Activated B cell treated with CpG ODN at 0.5 μM for 24 hours (primary cell): ENCODE measurements at regions of chr15 and their contacts with region 1.

Region 1: DNA sequence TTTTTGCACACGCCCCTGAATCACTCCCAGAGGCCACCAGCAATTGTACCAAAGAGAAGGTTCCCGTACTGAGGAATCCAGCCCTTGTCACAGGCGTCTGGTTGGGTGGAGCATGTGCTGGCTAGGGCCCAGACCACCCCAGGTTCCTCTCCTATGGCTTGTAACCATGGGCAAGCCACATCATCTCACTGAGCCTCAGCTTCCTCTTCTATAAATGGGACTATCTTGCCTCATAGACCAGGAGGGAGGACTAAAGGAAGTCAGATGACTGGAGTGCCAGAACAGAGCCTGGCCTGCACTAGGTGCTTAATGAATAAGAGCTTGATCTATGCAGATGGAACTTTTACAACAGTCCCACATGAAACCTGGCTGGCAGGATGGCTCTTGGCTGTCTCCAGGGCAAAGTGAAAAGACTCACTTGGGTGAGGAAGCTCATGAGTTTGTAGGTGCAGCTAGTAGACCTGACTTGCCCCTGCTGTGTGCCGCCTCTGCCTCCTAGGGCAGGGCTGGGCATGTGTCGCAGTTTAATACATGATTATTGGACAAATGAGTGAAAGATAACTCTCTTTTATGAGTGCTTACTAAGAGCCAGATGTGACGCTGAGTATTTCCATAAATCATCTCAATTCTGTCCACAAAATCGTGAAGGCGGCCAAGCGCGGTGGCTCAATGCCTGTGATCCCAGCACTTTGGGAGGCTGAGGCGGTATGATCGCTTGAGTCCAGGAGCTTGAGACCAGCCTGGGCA is 29.3 kb downstream of the CTSH start:
- DNase-seq: no peak
- ATAC-seq: no peak
- H3K4me3 Mint-ChIP-seq: no peak overlapping the region
- H3K27ac Mint-ChIP-seq: peak overlapping the region; percentile 19
- H3K4me1 Mint-ChIP-seq: peaks cover 11% of the 10 kb centered on the region
- H3K27me3 Mint-ChIP-seq: no peaks in the 10 kb centered on the region
- CTCF ChIP-seq: no peak

Region 2: GRCh38 chr15:78225783-78226541 is 689.6 kb before region 1 on chr15:
- CTCF ChIA-PET with region 1: no interaction called
- POLR2A ChIA-PET with region 1: no interaction called
- intact Hi-C with region 1: no loop called
- DNase-seq: no peak
- ATAC-seq: no peak
- H3K4me3 Mint-ChIP-seq: no peak overlapping the region
- H3K27ac Mint-ChIP-seq: no peak overlapping the region
- H3K4me1 Mint-ChIP-seq: no peaks in the 10 kb centered on the region
- H3K27me3 Mint-ChIP-seq: peaks cover 1% of the 10 kb centered on the region
- CTCF ChIP-seq: no peak

Region 3: DNA sequence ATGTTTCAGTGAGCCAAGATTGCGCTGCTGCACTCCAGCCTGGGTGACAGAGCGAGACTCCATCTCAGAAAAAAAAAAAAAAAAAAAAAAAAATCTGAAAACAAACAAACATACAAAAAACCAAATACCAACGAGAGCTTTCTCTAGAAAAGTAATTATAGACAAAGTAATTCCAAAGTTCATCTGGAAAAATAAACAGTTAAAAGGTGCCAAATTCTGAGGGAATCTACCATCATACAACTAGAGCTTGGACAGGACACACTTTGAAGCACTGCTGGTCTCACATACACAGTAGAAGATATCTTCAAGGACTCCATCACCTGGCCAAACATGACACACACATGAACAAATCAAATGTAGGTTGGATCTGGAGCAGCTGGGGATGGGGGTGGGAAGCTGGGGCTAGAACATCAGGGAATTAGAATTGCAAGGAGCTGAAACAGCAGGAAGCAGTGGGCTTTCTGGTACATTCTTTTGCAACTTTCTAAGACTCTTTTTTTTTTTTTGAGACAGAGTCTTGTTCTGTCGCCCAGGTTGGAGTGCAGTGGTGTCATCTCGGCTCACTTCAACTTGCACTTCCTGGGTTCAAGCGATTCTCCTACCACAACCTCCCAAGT is 70.5 kb after region 1 on chr15:
- CTCF ChIA-PET with region 1: no interaction called
- POLR2A ChIA-PET with region 1: interaction called, 11 read pairs
- intact Hi-C with region 1: no loop called
- DNase-seq: no peak
- ATAC-seq: no peak
- H3K4me3 Mint-ChIP-seq: no peak overlapping the region
- H3K27ac Mint-ChIP-seq: no peak overlapping the region
- H3K4me1 Mint-ChIP-seq: peaks cover 14% of the 10 kb centered on the region
- H3K27me3 Mint-ChIP-seq: no peaks in the 10 kb centered on the region
- CTCF ChIP-seq: no peak